AG04450 (cell line): ENCODE measurements at regions of chr1 and their contacts with region 1.

Region 1: GRCh38 chr1:25099343-25099951 is 132.9 kb downstream of the SYF2 start:
- DNase-seq: no peak
- H3K4me3 ChIP-seq: no peak overlapping the region
- H3K27ac ChIP-seq: no peak overlapping the region
- H3K27me3 ChIP-seq: peaks cover 54% of the 10 kb centered on the region
- CTCF ChIP-seq: no peak

Region 2: GRCh38 chr1:24847995-24848881 is 251.2 kb before region 1 on chr1:
- CTCF ChIA-PET with region 1: interaction called, 11 read pairs
- POLR2A ChIA-PET with region 1: no interaction called
- DNase-seq: peak; percentile 77
- H3K4me3 ChIP-seq: peak overlapping the region; percentile 50
- H3K27ac ChIP-seq: no peak overlapping the region
- H3K27me3 ChIP-seq: no peaks in the 10 kb centered on the region
- CTCF ChIP-seq: peak; percentile 88

Region 3: DNA sequence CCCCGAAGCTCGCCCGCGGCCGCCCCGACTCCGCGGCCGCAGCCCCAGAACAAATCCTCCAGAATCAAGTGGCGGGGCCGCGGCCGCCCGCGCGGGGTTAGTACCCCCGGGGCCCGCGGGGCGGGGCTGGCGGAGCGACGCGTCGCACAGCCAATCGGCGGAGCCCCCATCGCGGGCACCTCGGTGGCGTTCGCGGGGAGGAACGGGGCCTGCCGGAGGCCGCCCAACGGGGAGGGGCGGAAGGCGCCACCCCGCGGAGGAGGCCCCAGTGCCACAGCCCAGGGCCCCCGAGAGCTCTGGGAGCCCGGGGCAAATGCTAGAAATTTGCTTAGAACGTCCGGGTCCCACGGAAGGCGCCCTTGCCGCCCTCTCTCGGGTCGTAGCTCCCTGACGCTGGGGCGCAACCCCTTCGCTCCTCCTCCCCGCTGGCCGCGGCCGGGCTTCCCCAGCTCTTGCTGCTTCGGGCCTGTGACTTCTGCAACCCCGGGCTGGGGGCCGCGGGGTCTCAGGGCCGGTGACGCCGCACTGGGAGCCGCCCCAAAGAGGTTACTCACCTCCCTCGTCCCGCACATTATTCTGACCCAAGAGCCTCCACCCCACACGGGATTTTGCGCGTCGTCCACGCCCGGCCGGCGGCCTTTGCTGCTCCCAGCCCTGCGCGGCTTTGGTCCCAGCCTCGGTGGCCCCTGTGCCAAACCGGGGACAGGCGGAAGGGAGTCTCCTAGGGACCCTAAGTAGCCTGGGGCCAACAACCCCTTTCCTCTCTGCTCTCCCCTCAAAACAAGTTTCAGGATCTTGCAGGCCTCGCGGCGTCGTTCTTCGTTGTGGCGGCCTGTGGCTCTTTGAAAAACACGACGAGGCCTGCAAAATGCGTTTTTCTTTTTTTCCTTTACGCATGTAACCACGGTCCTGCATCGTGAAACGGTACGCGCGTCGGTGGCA is 169.0 kb before region 1 on chr1 and contains the start of gene RUNX3:
- CTCF ChIA-PET with region 1: interaction called, 38 read pairs
- POLR2A ChIA-PET with region 1: interaction called, 3 read pairs
- DNase-seq: no peak
- H3K4me3 ChIP-seq: no peak within 1 kb of the TSS
- H3K27ac ChIP-seq: no peak within 1 kb of the TSS
- H3K27me3 ChIP-seq: peaks cover 90% of the 10 kb centered on the region
- CTCF ChIP-seq: no peak
- polyA plus RNA-seq, gene RUNX3: not detected in 2 replicates